ENCODE measurements at regions of chr1 and their contacts with region 1.

Region 1: DNA sequence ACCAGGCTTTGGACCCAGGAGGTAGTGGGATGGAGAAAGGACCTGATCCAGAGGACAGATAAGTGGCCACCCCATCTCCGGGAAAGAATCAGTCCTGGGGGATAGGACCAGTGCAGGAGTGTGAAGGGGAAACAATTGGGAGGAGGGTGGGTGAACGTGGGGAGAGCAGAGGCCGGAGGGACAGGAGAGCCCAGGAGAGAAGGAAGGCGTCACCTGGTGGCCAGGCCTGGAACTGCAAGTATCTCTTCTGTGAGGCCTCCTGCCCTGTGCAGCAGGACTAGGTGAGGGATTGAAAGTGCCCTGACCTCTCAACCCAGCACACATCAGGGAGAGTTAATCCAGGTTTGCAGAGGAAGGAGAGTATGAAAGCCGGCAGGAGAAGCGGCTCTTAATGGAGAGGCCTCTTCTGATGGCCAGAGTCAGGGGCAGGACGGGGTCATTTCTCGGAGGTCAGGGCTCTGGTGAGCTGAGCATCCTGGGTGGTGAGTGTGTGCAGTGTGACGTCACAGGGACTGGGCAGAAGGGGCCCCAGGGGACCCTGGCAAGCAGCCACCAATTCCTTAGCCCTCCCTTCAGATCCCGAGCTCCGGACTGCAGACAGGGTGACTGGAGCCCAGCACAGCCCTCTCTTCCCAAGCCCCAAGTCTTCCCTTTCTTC is 9.2 kb upstream of the LAD1 start:
- DNase-seq: peak; percentile 70
- H3K4me3 ChIP-seq: no peak overlapping the region
- H3K27ac ChIP-seq: no peak overlapping the region
- H3K4me1 ChIP-seq: no peaks in the 10 kb centered on the region
- CTCF ChIP-seq: peak; percentile 89

Region 2: GRCh38 chr1:201385299-201385891 is 22.9 kb before region 1 on chr1:
- CTCF ChIA-PET with region 1: interaction called, 3 read pairs
- POLR2A ChIA-PET with region 1: no interaction called
- intact Hi-C with region 1: loop called (anchors 1 kb)
- DNase-seq: peak; percentile 63
- H3K4me3 ChIP-seq: no peak overlapping the region
- H3K27ac ChIP-seq: no peak overlapping the region
- H3K4me1 ChIP-seq: no peaks in the 10 kb centered on the region
- CTCF ChIP-seq: peak; percentile 89

Region 3: GRCh38 chr1:201419746-201420607 is 11.7 kb after region 1 on chr1:
- CTCF ChIA-PET with region 1: interaction called, 5 read pairs
- POLR2A ChIA-PET with region 1: interaction called, 12 read pairs
- intact Hi-C with region 1: no loop called
- DNase-seq: no peak
- H3K4me3 ChIP-seq: no peak overlapping the region
- H3K27ac ChIP-seq: no peak overlapping the region
- H3K4me1 ChIP-seq: peaks cover 59% of the 10 kb centered on the region
- CTCF ChIP-seq: no peak

Measured in OCI-LY7 (cell line).